CD4-positive, alpha-beta T cell (primary cell): ENCODE measurements at regions of chr22 and their contacts with region 1.

Region 1: GRCh38 chr22:30305519-30305905 is 16.2 kb upstream of the CASTOR1 start:
- DNase-seq: peak in 12 of 14 experiments; percentile 29 to 88 (median 54)
- ATAC-seq: peak; percentile 63
- H3K4me3 ChIP-seq: peak overlapping the region; percentile 34
- H3K4me3 Mint-ChIP-seq: peak overlapping the region; percentile 49
- H3K27ac ChIP-seq: peak overlapping the region; percentile 74 to 81
- H3K27ac Mint-ChIP-seq: peak overlapping the region; percentile 83
- H3K4me1 ChIP-seq: peaks cover 97% of the 10 kb centered on the region
- H3K4me1 Mint-ChIP-seq: peaks cover 97% of the 10 kb centered on the region
- H3K27me3 ChIP-seq: no peaks in the 10 kb centered on the region
- H3K27me3 Mint-ChIP-seq: no peaks in the 10 kb centered on the region
- CTCF ChIP-seq: no peak

Region 2: DNA sequence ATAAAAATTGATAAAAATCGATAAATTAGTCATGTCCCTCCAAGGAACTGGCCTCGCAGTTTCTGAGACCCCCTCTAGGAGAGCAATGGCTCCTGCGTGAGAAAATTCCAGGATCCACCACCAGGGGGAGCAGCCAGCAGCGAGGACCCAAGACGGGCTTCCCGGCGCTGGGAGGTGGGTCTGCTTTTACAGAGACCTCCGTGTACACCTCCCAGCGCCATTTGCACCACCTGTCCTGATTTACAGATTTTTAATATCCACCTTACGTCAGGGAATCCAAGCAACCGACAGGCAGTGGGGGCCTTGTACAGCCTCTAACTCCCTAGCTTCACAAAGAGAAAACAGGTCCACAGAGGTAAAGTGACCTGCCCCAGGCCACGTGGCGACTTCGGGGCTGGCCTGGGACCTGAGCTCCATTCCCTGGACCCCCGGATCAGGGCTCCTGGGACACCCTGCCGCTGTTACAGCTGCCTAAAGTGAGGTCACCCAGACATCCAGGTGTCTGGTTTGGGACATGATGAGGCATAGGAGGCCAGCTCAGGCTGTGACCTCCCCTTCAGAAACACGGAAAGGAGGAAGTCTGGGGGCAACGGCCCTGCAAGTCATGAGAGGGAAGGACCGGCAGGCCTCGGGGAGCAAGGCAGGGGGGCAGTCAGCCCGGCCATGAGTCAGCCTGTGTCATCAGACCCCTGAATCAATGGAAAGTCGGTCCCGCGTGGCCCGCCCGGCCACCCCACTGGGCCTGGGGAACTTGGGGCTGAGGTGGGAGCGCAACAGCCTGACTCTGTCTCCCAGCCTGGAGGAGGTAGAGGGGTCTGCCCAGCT is 42.4 kb before region 1 on chr22:
- CTCF ChIA-PET with region 1: no interaction called
- POLR2A ChIA-PET with region 1: interaction called, 5 read pairs
- intact Hi-C with region 1: loop called in 1 of 2 experiments (anchors 1 kb)
- DNase-seq: peak; percentile 68 to 89 (median 76)
- ATAC-seq: no peak
- H3K4me3 ChIP-seq: peak overlapping the region; percentile 21
- H3K4me3 Mint-ChIP-seq: peak overlapping the region; percentile 81
- H3K27ac ChIP-seq: peak overlapping the region in 1 of 2 donors; percentile 14
- H3K27ac Mint-ChIP-seq: peak overlapping the region; percentile 81
- H3K4me1 ChIP-seq: peaks cover 60% of the 10 kb centered on the region
- H3K4me1 Mint-ChIP-seq: peaks cover 49% of the 10 kb centered on the region
- H3K27me3 ChIP-seq: no peaks in the 10 kb centered on the region
- H3K27me3 Mint-ChIP-seq: no peaks in the 10 kb centered on the region
- CTCF ChIP-seq: peak; percentile 100

Region 3: DNA sequence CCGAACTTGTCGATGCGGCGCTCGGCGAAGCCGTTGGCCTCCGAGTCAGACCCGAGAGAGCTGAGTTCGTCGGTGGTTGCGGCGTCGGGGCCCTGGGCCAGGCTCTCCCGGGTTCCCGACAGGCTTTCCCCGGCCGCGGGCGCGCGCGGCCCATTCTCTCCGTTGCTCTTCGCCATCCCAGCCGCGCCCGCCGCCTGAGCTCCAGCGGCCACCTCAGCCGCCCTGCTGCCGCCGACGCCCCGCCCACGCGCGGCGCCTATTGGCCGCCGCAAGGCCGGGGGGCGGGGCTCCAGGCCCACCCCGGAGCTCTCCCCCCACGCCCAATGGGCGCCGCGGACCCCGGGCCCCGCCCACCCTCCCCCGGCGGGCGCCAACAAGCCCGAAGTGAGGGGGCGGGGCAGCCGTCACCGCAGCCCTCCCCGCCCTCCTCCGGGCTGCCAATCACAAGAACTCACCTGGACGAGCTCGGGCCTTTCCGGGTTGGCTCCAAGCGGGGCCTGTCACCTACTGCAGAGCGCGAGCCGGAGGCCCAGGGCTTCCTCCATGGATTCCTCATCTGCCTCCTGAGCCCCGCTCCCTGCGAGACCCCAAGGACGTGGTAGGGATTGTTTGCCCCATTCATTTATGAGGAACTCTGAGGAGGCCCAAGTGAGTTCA is 21.3 kb after region 1 on chr22 and contains the start of gene TBC1D10A:
- CTCF ChIA-PET with region 1: interaction called, 4 read pairs
- POLR2A ChIA-PET with region 1: interaction called, 290 read pairs
- intact Hi-C with region 1: loop called (anchors 2 kb)
- DNase-seq: peak; percentile 84 to 98 (median 94)
- ATAC-seq: peak; percentile 89
- H3K4me3 ChIP-seq: peak within 1 kb of the TSS; percentile 71
- H3K4me3 Mint-ChIP-seq: peak within 1 kb of the TSS; percentile 93
- H3K27ac ChIP-seq: peak within 1 kb of the TSS; percentile 63 to 74
- H3K27ac Mint-ChIP-seq: peak within 1 kb of the TSS; percentile 97
- H3K4me1 ChIP-seq: peaks cover 54% of the 10 kb centered on the region
- H3K4me1 Mint-ChIP-seq: peaks cover 51% of the 10 kb centered on the region
- H3K27me3 ChIP-seq: no peaks in the 10 kb centered on the region
- H3K27me3 Mint-ChIP-seq: no peaks in the 10 kb centered on the region
- CTCF ChIP-seq: no peak
- total RNA-seq, gene TBC1D10A: 38.9 to 41.8 TPM

Region 4: GRCh38 chr22:30435674-30436126 is 130.2 kb after region 1 on chr22:
- CTCF ChIA-PET with region 1: no interaction called
- POLR2A ChIA-PET with region 1: interaction called, 3 read pairs
- intact Hi-C with region 1: loop called in 1 of 2 experiments (anchors 5 kb)
- DNase-seq: peak; percentile 68 to 97 (median 80)
- ATAC-seq: peak; percentile 93
- H3K4me3 ChIP-seq: peak overlapping the region; percentile 44
- H3K4me3 Mint-ChIP-seq: peak overlapping the region; percentile 9
- H3K27ac ChIP-seq: peak overlapping the region; percentile 69 to 94
- H3K27ac Mint-ChIP-seq: peak overlapping the region; percentile 89
- H3K4me1 ChIP-seq: peaks cover 24% of the 10 kb centered on the region
- H3K4me1 Mint-ChIP-seq: peaks cover 25% of the 10 kb centered on the region
- H3K27me3 ChIP-seq: peaks cover 7 to 22% of the 10 kb centered on the region in 2 experiments
- H3K27me3 Mint-ChIP-seq: peaks cover 23% of the 10 kb centered on the region
- CTCF ChIP-seq: peak; percentile 52